Activated CD4-positive, alpha-beta T cell treated with anti-CD3 and anti-CD28 coated beads, Interleukin-2, amount 10 ng/mL, durations not matched to agents 7 days and 5 days (primary cell): ENCODE measurements at regions of chr11 and their contacts with region 1.

Region 1: DNA sequence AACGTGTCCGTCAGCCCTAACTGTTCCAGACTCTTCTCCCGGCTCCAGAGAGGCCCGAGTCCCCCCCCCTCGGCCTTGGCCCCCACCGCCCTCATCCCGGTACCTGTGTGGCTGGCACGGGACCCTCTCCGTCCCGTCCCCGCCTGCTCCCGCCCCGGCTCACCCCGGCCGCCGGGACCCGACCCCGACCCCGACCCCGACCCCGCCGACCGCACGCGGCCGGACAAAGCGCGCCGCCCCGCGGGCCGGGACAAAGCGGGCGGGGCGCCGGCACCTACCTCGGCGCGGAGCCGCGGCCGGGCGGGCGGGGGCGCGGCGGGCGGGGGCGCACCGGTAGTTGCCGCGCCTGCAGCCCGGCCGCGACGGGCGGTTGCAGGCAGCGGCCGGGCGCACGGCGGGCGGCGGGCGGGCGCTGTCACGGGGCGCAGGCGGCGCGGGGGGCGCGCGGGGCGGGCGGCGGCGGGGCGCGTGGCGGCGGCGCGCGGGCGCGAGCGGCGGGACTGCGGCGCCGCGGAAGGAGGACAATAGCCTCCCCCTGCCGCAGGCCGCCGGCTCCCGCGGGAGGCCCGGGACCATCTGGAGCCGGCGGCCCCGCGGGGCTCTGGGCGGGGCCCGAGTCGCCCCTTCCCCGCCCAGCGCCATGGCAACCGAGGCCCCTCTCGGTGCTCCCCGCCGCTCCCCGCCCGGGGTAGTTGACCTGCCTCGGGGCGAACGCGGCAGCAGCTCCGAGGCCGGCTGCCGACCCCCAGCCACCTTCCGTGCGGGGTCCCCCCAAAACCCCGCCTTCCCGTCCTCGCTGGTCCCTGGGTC is 928 bp downstream of the SPTBN2 start:
- DNase-seq: no peak
- H3K4me3 Mint-ChIP-seq: peak overlapping the region; percentile 67
- H3K27ac Mint-ChIP-seq: no peak overlapping the region
- H3K4me1 Mint-ChIP-seq: peaks cover 14% of the 10 kb centered on the region
- H3K27me3 Mint-ChIP-seq: peaks cover 68% of the 10 kb centered on the region

Region 2: GRCh38 chr11:66739983-66740382 is 11.9 kb after region 1 on chr11:
- CTCF ChIA-PET with region 1: interaction called, 10 read pairs
- POLR2A ChIA-PET with region 1: no interaction called
- DNase-seq: no peak
- H3K4me3 Mint-ChIP-seq: no peak overlapping the region
- H3K27ac Mint-ChIP-seq: no peak overlapping the region
- H3K4me1 Mint-ChIP-seq: peaks cover 3% of the 10 kb centered on the region
- H3K27me3 Mint-ChIP-seq: peaks cover 10% of the 10 kb centered on the region

Region 3: GRCh38 chr11:66768088-66768521 is 40.0 kb after region 1 on chr11:
- CTCF ChIA-PET with region 1: no interaction called
- POLR2A ChIA-PET with region 1: no interaction called
- DNase-seq: no peak
- H3K4me3 Mint-ChIP-seq: no peak overlapping the region
- H3K27ac Mint-ChIP-seq: no peak overlapping the region
- H3K4me1 Mint-ChIP-seq: no peaks in the 10 kb centered on the region
- H3K27me3 Mint-ChIP-seq: no peaks in the 10 kb centered on the region